ENCODE measurements at regions of chr19 and their contacts with region 1.

Region 1: DNA sequence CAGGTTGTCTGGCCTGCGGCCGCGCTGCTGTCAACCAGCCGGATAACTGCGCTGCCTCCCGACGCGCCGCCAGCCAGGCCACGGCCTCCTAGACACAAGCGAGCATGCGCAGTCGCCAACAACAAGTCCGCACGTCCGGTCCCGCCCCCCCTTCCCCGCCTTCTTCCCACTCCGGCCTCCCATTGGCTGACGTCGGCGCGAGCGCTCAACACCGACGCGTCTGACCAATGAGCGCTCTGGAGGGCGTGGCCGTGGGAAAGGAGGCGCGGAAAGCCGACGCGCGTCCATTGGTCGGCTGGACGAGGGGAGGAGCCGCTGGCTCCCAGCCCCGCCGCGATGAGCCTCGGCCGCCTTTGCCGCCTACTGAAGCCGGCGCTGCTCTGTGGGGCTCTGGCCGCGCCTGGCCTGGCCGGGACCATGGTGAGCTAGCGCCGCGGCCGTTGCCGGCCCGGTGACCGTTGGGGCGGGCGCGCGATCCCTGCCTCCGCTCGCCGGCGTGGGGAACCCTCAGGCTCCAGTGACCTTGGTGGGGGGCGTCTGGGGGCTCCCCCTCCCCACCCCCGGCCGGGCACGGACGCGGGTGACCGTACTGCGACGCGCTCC is at the start of gene GPX4:
- DNase-seq: peak; percentile 96 to 98
- H3K4me3 ChIP-seq: peak within 1 kb of the TSS; percentile 97
- H3K4me3 Mint-ChIP-seq: peak within 1 kb of the TSS; percentile 68
- H3K27ac Mint-ChIP-seq: peak within 1 kb of the TSS; percentile 73
- H3K4me1 ChIP-seq: peaks cover 28% of the 10 kb centered on the region
- H3K4me1 Mint-ChIP-seq: peaks cover 4% of the 10 kb centered on the region
- H3K27me3 ChIP-seq: no peaks in the 10 kb centered on the region
- H3K27me3 Mint-ChIP-seq: no peaks in the 10 kb centered on the region
- CTCF ChIP-seq: no peak
- total RNA-seq, gene GPX4: 500 and 546 TPM in 2 replicates

Region 2: DNA sequence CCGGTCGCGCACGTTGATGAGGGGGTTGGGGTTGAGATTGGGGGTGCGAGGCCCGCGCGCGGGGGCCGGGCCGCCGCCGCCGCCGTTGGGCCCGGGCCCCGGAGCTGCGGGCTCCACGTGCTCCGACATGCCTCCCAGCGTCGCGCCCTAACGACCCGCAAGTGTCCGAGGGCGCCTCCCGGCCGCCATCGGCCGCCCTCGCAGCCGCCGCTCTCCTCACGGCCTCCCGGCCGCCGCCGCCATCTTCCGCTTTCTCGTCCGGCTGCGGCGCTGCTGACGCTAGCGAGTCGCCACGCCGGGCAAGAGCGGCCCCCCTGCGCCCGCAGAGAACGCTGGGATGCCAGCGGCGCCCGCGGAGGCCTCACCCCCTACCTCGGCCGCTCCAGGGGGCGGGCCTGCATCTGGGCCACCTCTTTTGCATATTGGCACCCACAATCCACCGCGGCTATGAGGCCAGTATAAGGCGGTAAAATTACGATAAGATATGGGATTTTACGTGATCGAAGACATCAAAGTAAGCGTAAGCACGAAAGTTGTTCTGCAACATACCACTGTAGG is 82.9 kb before region 1 on chr19 and contains the start of gene TMEM259:
- CTCF ChIA-PET with region 1: no interaction called
- POLR2A ChIA-PET with region 1: interaction called, 6 read pairs
- intact Hi-C with region 1: loop called (anchors 10 kb)
- DNase-seq: peak; percentile 97
- H3K4me3 ChIP-seq: peak within 1 kb of the TSS; percentile 62
- H3K4me3 Mint-ChIP-seq: peak within 1 kb of the TSS; percentile 95
- H3K27ac Mint-ChIP-seq: peak within 1 kb of the TSS; percentile 99
- H3K4me1 ChIP-seq: peaks cover 23% of the 10 kb centered on the region
- H3K4me1 Mint-ChIP-seq: peaks cover 15% of the 10 kb centered on the region
- H3K27me3 ChIP-seq: no peaks in the 10 kb centered on the region
- H3K27me3 Mint-ChIP-seq: no peaks in the 10 kb centered on the region
- CTCF ChIP-seq: no peak
- total RNA-seq, gene TMEM259: 148 and 154 TPM in 2 replicates

Region 3: DNA sequence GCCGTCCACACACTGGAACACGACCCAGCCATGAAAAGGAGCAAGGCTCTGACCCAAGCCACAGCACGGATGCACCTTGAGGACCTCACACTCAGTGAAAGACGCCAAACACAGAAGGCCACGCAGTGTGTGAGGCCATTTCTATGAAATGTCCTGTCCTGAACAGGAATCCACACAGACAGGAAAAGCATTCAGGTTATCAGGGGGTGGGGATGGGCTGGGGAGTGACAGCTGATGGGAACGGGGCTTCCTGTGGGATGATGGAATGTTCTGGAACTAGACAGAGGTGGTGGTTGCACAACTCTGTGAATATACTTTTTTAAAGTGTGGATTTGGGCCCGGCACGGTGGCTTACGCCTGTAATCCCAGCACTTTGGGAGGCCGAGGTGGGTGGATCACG is 30.6 kb after region 1 on chr19:
- CTCF ChIA-PET with region 1: no interaction called
- POLR2A ChIA-PET with region 1: interaction called, 10 read pairs
- intact Hi-C with region 1: no loop called
- DNase-seq: no peak
- H3K4me3 ChIP-seq: no peak overlapping the region
- H3K4me3 Mint-ChIP-seq: no peak overlapping the region
- H3K27ac Mint-ChIP-seq: no peak overlapping the region
- H3K4me1 ChIP-seq: peaks cover 6% of the 10 kb centered on the region; the same call in 1 of the 2 replicates
- H3K4me1 Mint-ChIP-seq: no peaks in the 10 kb centered on the region
- H3K27me3 ChIP-seq: no peaks in the 10 kb centered on the region
- H3K27me3 Mint-ChIP-seq: no peaks in the 10 kb centered on the region
- CTCF ChIP-seq: no peak